ENCODE measurements at regions of chr1 and their contacts with region 1.

Region 1: GRCh38 chr1:9084906-9085305 is 15.5 kb upstream of the SLC2A5 start:
- DNase-seq: no peak
- H3K4me3 ChIP-seq: no peak overlapping the region
- H3K27ac ChIP-seq: peak overlapping the region; percentile 42
- H3K4me1 ChIP-seq: peaks cover 62% of the 10 kb centered on the region
- CTCF ChIP-seq: no peak

Region 2: GRCh38 chr1:9069326-9070100 is 15.4 kb before region 1 on chr1 and contains the start of gene SLC2A5:
- CTCF ChIA-PET with region 1: interaction called, 3 read pairs
- POLR2A ChIA-PET with region 1: interaction called, 28 read pairs
- intact Hi-C with region 1: loop called (anchors 1 kb)
- DNase-seq: peak; percentile 97
- H3K4me3 ChIP-seq: peak within 1 kb of the TSS; percentile 83
- H3K27ac ChIP-seq: peak within 1 kb of the TSS; percentile 92
- H3K4me1 ChIP-seq: peaks cover 64% of the 10 kb centered on the region
- CTCF ChIP-seq: peak; percentile 24; the same call in 1 of the 2 replicates
- total RNA-seq, gene SLC2A5: 109 and 112 TPM in 2 replicates

Region 3: DNA sequence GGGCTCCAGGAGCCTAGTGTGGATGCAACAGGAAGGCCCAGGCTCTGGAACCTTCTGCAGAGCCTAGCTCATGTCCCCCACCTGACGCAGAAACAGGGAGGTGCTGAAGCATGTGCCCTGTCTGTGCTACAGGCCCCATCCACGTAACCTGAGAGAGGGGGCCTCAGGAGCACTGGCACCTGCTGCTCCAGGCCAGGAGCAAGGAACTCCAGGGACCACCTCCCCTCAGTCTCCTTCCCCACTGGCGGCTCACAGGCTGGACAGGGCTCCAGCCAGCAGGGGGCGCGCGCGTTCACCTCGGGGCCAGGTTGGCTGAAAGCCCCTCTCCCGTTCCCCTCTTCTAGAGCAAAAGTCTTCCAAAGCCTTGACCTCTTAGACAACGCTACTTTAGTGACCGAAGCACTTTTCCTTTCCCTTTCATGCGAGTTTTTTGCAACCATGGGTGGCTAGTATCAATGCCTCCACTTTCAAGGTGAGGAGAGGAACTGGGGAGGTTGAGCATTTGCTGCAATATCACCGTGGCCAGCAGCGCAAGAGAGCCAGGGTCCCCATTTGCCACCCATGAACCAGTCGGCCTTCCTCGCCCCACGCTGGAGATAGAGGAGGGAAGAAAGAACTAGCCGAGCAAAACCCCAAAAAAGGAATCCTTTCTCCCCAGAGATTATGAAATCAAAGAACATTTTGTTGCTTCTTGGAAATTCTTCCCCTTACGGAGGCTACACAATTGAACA is 96.4 kb after region 1 on chr1:
- CTCF ChIA-PET with region 1: no interaction called
- POLR2A ChIA-PET with region 1: no interaction called
- intact Hi-C with region 1: no loop called
- DNase-seq: peak; percentile 63
- H3K4me3 ChIP-seq: no peak overlapping the region
- H3K27ac ChIP-seq: no peak overlapping the region
- H3K4me1 ChIP-seq: peaks cover 10% of the 10 kb centered on the region
- CTCF ChIP-seq: peak; percentile 99